Activated naive CD4-positive, alpha-beta T cell treated with anti-CD3 and anti-CD28 coated beads, Interleukin-2, amount 10 ng/mL, durations not matched to agents 7 days and 5 days (primary cell): ENCODE measurements at regions of chr1 and their contacts with region 1.

Region 1: DNA sequence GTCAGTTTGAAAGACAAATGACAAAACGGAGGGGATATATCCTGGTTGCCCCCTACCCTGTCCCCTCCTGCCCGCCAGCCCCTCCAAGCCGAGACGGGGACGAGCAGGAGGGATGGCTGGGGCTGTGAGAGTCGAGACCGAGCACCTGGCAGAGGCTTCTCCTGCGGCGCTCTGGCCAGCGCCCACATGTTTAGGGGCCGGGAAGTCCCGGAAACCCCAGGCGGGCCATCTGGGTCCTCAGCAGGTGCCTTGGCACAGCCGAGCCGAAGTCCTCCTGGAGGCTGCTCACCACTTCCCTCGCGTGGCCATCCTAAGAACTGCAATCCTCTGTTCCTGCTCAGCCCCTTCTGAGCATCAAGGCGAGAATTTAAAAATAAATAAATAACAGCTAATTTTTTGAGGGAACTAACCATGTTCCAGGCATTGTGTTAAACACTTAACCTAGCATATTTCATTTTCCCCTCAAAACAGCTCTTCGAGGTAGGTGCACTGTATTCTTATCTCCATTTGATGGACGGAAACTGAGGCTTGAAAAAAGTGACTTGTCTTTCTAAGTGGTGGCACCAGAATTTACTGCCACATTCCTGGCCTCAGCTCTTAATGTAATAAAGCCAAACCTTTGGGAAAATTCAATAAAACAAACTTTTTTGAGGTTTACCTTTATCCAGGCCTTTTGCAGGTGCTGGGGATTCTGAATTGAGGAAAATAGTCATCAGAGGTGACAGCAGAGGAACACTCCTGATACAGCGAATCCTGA is 3.5 kb upstream of the RIMS3 start:
- DNase-seq: peak; percentile 91
- H3K4me3 Mint-ChIP-seq: peak overlapping the region; percentile 41
- H3K27ac Mint-ChIP-seq: no peak overlapping the region
- H3K4me1 Mint-ChIP-seq: peaks cover 14% of the 10 kb centered on the region
- H3K27me3 Mint-ChIP-seq: peaks cover 36% of the 10 kb centered on the region

Region 2: GRCh38 chr1:40553017-40553416 is 115.9 kb before region 1 on chr1:
- CTCF ChIA-PET with region 1: no interaction called
- DNase-seq: no peak
- H3K4me3 Mint-ChIP-seq: no peak overlapping the region
- H3K27ac Mint-ChIP-seq: no peak overlapping the region
- H3K4me1 Mint-ChIP-seq: no peaks in the 10 kb centered on the region
- H3K27me3 Mint-ChIP-seq: peaks cover 4% of the 10 kb centered on the region

Region 3: DNA sequence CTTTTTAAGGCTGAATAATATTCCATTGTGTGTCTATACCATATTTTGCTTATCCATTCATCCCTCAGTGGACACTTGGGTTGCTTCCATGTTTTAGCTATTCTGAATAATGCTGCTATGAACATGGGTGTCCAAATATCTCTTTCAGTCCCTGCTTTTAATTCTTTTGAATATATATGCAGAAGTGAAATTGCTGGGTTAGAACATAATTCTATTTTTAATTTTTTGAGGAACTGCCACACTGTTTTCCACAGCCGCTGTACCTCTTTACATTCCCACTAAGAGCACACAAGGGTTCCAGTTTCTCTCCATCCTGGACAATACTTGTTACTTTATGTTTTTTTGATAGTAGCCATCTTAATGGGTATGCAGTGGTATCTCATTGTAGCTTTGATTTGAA is 69.0 kb before region 1 on chr1:
- CTCF ChIA-PET with region 1: no interaction called
- DNase-seq: no peak
- H3K4me3 Mint-ChIP-seq: no peak overlapping the region
- H3K27ac Mint-ChIP-seq: no peak overlapping the region
- H3K4me1 Mint-ChIP-seq: no peaks in the 10 kb centered on the region
- H3K27me3 Mint-ChIP-seq: peaks cover 25% of the 10 kb centered on the region

Region 4: GRCh38 chr1:40691538-40692428 is 22.8 kb after region 1 on chr1 and contains the start of gene NFYC:
- CTCF ChIA-PET with region 1: interaction called, 31 read pairs
- DNase-seq: peak; percentile 98
- H3K4me3 Mint-ChIP-seq: peak within 1 kb of the TSS; percentile 81
- H3K27ac Mint-ChIP-seq: peak within 1 kb of the TSS; percentile 94
- H3K4me1 Mint-ChIP-seq: peaks cover 55% of the 10 kb centered on the region
- H3K27me3 Mint-ChIP-seq: no peaks in the 10 kb centered on the region